Gastrocnemius medialis (tissue), 4 donors: ENCODE measurements at regions of chr13 and their contacts with region 1.

Region 1: GRCh38 chr13:60163478-60164233 is at the start of gene DIAPH3:
- DNase-seq: peak; percentile 91 to 94
- ATAC-seq: peak; percentile 98 to 99
- H3K4me3 ChIP-seq: peak within 1 kb of the TSS; percentile 72 to 78 (median 72)
- H3K27ac ChIP-seq: peak within 1 kb of the TSS; percentile 76 to 86 (median 84)
- H3K4me1 ChIP-seq: peaks cover 15 to 16% of the 10 kb centered on the region in 2 donors
- H3K27me3 ChIP-seq: no peaks in the 10 kb centered on the region
- CTCF ChIP-seq: no peak
- POLR2A ChIP-seq: peak; percentile 35 to 48
- total RNA-seq, gene DIAPH3: 0.13 TPM in 1 of 4 donors, not detected in the others

Region 2: GRCh38 chr13:60047918-60048317 is 115.7 kb before region 1 on chr13:
- in situ Hi-C with region 1: no loop called
- intact Hi-C with region 1: no loop called
- DNase-seq: no peak
- ATAC-seq: no peak
- H3K4me3 ChIP-seq: no peak overlapping the region
- H3K27ac ChIP-seq: no peak overlapping the region
- H3K4me1 ChIP-seq: no peaks in the 10 kb centered on the region
- H3K27me3 ChIP-seq: no peaks in the 10 kb centered on the region
- CTCF ChIP-seq: no peak
- POLR2A ChIP-seq: no peak

Region 3: GRCh38 chr13:60396783-60397703 is 233.4 kb after region 1 on chr13 and contains the start of gene TDRD3:
- in situ Hi-C with region 1: loop called in 3 of 4 experiments (anchors 10 to 25 kb)
- intact Hi-C with region 1: loop called (anchors 2 kb)
- DNase-seq: peak; percentile 77 to 85
- ATAC-seq: peak; percentile 83 to 87
- H3K4me3 ChIP-seq: peak within 1 kb of the TSS; percentile 68 to 91 (median 79)
- H3K27ac ChIP-seq: peak within 1 kb of the TSS; percentile 93 to 98 (median 96)
- H3K4me1 ChIP-seq: peaks cover 28 to 37% of the 10 kb centered on the region in 2 donors
- H3K27me3 ChIP-seq: no peaks in the 10 kb centered on the region
- CTCF ChIP-seq: peak; percentile 76 to 93 (median 82)
- POLR2A ChIP-seq: peak; percentile 56 to 72
- total RNA-seq, gene TDRD3: 13.1 to 37.8 (median 17.7) TPM